GM13977 (cell line): ENCODE measurements at regions of chr6 and their contacts with region 1.

Region 1: GRCh38 chr6:52063584-52064344 is 23.6 kb downstream of the PKHD1 start:
- DNase-seq: peak; percentile 37
- CTCF ChIP-seq: peak; percentile 53

Region 2: DNA sequence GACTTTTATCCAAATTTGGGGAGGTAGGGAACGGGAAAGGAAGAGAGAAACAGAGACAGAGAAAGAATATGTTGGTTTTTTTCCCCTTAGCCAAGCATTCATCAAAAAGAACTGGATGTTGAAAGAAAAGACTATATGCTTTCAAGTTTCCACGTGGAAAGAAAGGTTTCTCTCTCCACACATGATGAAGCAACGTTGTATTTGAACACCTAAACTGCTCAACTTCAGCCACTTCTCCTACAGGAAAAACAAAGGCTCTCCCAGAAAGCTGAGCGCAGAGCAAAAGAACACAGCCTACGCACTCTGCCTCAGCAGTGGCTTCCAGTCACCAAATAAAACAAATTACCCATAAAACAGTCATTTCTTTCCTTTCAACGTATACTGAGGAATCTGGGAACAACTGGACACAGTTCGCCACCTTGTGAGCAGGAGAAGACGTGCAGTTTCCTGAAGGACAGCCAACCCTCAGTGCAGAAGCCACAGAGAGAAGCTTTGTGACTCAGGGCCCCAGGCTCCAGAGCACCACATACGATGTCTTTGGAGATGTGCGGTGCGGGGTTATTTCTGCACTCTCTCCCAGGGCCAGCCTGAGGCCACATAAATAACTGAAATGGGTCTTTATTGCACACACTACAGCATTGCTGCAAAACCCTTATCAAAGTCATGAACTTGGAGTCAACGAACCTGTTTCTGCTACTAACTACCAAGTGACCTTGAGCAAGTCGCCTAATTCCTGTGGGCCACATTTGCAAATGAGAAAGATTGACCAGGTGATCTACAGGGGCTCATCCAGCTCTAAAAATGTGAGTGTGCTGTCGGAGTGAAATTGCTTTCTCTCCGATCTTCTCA is 170.4 kb after region 1 on chr6:
- in situ Hi-C with region 1: loop called (anchors 25 kb)
- DNase-seq: peak; percentile 49
- CTCF ChIP-seq: peak; percentile 90